Activated CD8-positive, alpha-beta T cell treated with anti-CD3 and anti-CD28 coated beads for 36 hours (primary cell): ENCODE measurements at regions of chr10 and their contacts with region 1.

Region 1: DNA sequence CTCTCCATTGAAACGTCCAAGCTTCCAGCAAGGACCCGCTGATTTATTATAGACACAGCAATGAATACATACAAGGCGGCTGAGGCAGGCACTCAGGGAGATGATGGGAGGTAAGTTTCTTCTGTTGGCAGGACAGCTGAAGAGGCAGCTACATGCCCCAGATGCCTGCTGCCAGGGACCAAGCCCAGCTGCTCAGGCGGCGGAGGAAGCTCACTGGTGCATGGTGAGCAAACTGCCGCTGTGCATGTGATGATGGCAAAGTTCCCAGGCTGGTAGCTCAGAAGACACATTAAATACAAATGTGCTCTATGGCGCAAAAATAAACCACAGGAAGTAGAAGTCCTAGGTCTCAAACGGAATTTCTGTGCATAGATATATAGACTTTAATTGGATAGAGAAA is 2.3 kb downstream of the DNTT start:
- DNase-seq: peak; percentile 19
- ATAC-seq: peak; percentile 24
- H3K4me3 Mint-ChIP-seq: no peak overlapping the region
- H3K27ac Mint-ChIP-seq: no peak overlapping the region
- H3K4me1 Mint-ChIP-seq: peaks cover 22% of the 10 kb centered on the region
- H3K27me3 Mint-ChIP-seq: peaks cover 6% of the 10 kb centered on the region
- CTCF ChIP-seq: no peak

Region 2: DNA sequence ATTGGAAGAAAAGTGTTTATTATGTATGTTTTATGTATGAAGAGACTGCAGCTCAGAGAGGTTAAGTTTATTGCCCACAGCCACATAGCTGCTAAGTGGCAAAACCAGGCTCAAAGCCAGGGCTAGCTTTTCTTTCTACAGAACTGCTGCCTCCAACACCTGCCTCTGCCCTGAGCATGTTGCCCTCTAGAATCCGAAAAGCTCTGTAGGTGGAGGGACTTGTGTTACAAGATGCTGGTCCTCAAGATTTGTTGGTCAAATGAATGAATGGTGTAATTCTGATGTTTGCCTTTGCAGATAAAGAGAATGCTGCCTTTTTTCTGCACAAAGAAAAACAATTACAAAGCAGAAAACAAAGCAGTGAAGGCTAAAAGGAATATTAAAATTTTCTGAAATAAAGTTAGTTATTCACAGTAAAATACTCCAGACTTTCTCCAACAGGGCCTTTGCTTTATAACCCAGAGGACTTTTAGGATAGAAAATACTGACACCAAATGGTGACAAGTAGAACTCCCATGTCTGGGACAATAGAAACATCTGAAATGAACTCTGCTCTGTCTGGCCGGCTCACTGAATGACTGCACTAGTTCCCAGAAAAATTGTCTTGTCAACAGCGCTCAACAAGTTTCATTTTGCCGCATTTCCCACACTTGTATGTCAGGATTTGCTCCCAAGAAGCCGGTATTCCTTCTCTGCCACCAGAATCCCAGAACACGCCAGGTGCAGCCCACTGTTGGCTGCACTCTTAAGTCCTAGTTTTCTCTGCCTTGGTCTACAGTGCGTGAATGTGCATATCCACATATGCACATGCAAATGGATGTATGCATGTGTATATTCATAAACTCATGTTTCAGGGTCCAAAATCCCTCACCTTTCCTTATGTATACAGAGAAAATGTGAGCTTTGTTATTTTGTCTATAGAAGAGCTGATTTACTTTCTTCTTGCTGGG is 13.3 kb before region 1 on chr10:
- CTCF ChIA-PET with region 1: interaction called, 22 read pairs
- POLR2A ChIA-PET with region 1: interaction called, 3 read pairs
- intact Hi-C with region 1: no loop called
- DNase-seq: no peak
- ATAC-seq: peak; percentile 76
- H3K4me3 Mint-ChIP-seq: no peak overlapping the region
- H3K27ac Mint-ChIP-seq: no peak overlapping the region
- H3K4me1 Mint-ChIP-seq: peaks cover 21% of the 10 kb centered on the region
- H3K27me3 Mint-ChIP-seq: peaks cover 5% of the 10 kb centered on the region
- CTCF ChIP-seq: peak; percentile 48

Region 3: DNA sequence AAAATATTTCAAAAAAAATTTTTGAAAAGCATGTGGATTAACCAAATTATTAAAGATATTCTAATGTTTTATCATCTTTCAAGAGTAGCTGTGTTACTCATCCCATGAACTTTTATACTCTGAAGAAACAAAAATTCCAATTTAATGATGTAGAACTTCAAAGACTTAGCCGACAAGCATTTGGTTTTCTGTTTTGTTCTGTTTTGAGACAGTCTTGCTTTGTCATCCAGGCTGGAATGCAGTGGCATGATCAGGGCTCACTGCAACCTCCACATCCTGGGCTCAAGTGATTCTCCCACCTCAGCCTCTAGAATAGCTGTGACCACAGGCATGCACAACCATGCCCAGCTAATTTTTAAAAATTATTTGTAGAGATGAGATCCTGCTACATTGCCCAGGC is 507.7 kb after region 1 on chr10:
- CTCF ChIA-PET with region 1: no interaction called
- POLR2A ChIA-PET with region 1: no interaction called
- intact Hi-C with region 1: no loop called
- DNase-seq: no peak
- ATAC-seq: no peak
- H3K4me3 Mint-ChIP-seq: no peak overlapping the region
- H3K27ac Mint-ChIP-seq: no peak overlapping the region
- H3K4me1 Mint-ChIP-seq: no peaks in the 10 kb centered on the region
- H3K27me3 Mint-ChIP-seq: peaks cover 9% of the 10 kb centered on the region
- CTCF ChIP-seq: no peak